Heart left ventricle (tissue), 16 donors: ENCODE measurements at regions of chr7 and their contacts with region 1.

Region 1: DNA sequence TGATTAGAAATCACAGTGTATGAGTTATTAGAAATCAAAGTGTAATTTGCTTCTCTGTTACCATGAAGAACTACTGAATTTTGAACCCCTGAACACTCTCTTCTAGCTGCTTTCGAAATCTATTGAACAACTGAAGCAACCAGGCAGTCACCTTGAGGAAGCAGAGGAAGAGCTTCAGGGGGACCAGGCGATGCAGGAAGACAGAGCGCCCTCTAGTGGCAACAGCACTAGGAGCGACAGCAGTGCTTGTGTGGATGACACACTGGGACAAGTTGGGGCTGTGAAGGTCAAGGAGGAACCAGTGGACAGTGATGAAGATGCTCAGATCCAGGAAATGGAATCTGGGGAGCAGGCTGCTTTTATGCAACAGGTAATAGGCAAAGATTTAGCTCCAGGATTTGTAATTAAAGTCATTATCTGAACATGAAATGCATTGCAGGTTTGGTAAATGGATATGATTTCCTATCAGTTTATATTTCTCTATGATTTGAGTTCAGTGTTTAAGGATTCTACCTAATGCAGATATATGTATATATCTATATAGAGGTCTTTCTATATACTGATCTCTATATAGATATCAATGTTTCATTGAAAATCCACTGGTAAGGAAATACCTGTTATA is 170.7 kb downstream of the HDAC9 start:
- DNase-seq: peak; percentile 79 to 83 (median 79)
- ATAC-seq: peak; percentile 77 to 94 (median 90)
- H3K4me3 ChIP-seq: no peak overlapping the region
- H3K27ac ChIP-seq: no peak overlapping the region
- H3K4me1 ChIP-seq: peaks cover 0 to 23% (median 9%) of the 10 kb centered on the region in 12 donors
- H3K27me3 ChIP-seq: no peaks in the 10 kb centered on the region
- CTCF ChIP-seq: peak; percentile 79 to 98 (median 92)
- POLR2A ChIP-seq: no peak

Region 2: DNA sequence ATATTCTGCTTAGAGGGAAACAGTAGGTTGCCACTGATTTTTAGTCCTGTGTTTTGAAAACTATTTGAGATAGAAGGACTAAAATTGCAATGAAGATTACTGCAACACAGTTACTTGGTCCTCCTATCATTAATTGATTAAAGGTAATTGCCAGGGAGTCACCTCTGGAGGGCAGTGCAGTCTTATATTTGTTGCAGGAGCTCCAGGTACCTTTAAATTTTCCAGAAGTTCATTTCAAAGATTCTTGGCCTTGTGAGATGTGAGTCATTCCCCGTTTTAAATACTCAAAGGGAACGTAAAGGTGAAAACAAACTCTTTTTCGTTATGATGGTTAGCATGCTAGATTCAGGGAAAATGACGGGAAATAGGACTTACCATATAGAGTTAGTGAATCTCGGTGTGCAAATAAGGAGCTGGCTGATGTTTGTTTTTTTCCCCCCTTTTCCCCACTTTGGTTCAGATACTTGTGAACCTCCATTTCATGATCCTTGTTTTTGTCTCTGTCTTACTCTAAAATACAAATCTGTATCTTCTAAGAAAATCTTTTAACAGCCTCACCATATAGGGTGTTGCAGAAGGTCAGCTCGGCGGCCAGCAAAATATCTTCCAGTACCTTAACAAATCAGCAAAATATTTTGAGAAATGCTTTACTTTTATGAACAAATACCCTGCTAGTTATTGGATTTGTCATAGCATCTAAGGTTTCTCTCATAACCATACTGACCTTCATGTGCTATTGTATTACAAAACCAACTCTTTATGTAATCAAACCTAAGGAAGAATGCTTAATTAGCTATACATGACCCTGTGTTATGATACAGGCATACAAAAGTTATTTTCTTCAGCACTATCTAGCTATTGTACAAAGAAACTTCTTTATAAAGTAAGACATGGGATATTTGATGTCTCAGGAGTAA is 313.6 kb before region 1 on chr7:
- intact Hi-C with region 1: loop called (anchors 2 to 10 kb)
- DNase-seq: peak in 4 of 5 donors; percentile 26 to 30 (median 29)
- ATAC-seq: peak in 3 of 4 donors; percentile 63 to 77 (median 71)
- H3K4me3 ChIP-seq: no peak overlapping the region
- H3K27ac ChIP-seq: no peak overlapping the region
- H3K4me1 ChIP-seq: peaks cover 0 to 12% (median 5%) of the 10 kb centered on the region in 12 donors
- H3K27me3 ChIP-seq: no peaks in the 10 kb centered on the region
- CTCF ChIP-seq: peak; percentile 33 to 77 (median 62)
- POLR2A ChIP-seq: no peak

Region 3: DNA sequence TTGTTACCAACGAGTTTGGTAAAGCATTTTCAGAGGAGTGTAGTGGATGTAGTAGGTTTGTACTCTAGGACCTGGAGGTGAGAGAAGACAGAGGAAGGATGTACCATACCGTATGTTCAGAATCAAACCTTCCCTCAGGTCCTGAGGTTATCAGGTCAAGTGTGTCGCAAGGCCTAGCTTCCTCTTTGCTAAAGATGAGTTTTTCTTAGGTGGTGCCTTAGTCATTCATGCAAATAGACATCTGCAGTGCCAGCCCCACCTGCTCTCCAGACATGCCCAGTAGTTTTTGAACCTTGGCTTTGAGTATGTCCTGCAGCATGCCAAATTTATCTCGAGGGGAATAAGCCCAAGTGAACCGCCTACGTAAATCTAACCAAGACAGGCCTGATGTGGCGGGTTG is 99.4 kb before region 1 on chr7:
- intact Hi-C with region 1: no loop called
- DNase-seq: no peak
- ATAC-seq: no peak
- H3K4me3 ChIP-seq: no peak overlapping the region
- H3K27ac ChIP-seq: no peak overlapping the region
- H3K4me1 ChIP-seq: peaks cover 0 to 26% (median 6%) of the 10 kb centered on the region in 12 donors
- H3K27me3 ChIP-seq: no peaks in the 10 kb centered on the region
- CTCF ChIP-seq: no peak
- POLR2A ChIP-seq: no peak

Region 4: DNA sequence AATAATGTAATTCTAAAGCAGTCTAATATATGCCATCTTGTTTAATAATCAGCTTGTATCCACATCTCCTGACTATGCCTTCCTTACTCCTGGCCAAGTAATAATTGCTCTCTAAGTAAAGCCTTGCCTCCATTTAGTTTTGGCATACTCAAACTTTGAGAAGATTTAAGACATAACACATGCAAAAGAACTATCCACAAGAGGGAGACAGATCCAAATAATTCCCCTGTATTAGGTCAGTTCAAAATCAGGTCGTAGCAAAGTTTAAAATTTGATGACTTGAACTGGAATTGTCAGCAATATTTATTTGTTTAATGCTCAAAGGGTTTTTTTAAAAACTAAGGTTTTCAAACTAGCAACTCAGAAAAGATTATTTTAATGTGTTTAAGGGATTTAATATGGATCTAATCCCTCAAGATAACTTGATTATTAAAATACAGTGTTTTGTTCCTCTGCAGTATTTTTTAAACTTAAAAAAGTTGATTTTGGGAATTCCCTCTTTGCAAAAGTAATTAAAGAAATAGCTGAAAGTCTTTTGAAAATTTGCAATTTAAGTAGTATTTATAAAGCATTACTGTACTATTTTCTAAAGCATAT is 75.4 kb before region 1 on chr7:
- intact Hi-C with region 1: loop called in 8 of 10 experiments (anchors 2 to 10 kb)
- DNase-seq: no peak
- ATAC-seq: peak in 2 of 4 donors; percentile 48 to 50
- H3K4me3 ChIP-seq: no peak overlapping the region
- H3K27ac ChIP-seq: no peak overlapping the region
- H3K4me1 ChIP-seq: peaks cover 0 to 6% (median 0%) of the 10 kb centered on the region in 12 donors
- H3K27me3 ChIP-seq: no peaks in the 10 kb centered on the region
- CTCF ChIP-seq: peak; percentile 33 to 69 (median 54)
- POLR2A ChIP-seq: no peak

Region 5: GRCh38 chr7:18597754-18598153 is 68.5 kb before region 1 on chr7:
- intact Hi-C with region 1: loop called in 7 of 10 experiments (anchors 5 to 10 kb)
- DNase-seq: no peak
- ATAC-seq: peak; percentile 49 to 73 (median 68)
- H3K4me3 ChIP-seq: no peak overlapping the region
- H3K27ac ChIP-seq: peak overlapping the region in 5 of 12 donors; percentile 13 to 62 (median 43)
- H3K4me1 ChIP-seq: peaks cover 0 to 14% (median 0%) of the 10 kb centered on the region in 12 donors
- H3K27me3 ChIP-seq: no peaks in the 10 kb centered on the region
- CTCF ChIP-seq: no peak
- POLR2A ChIP-seq: no peak

Region 6: GRCh38 chr7:18610331-18610948 is 55.8 kb before region 1 on chr7:
- intact Hi-C with region 1: loop called in 1 of 10 experiments (anchors 10 kb)
- DNase-seq: no peak
- ATAC-seq: no peak
- H3K4me3 ChIP-seq: no peak overlapping the region
- H3K27ac ChIP-seq: no peak overlapping the region
- H3K4me1 ChIP-seq: peaks cover 0 to 2% (median 0%) of the 10 kb centered on the region in 12 donors
- H3K27me3 ChIP-seq: no peaks in the 10 kb centered on the region
- CTCF ChIP-seq: peak; percentile 16 to 58 (median 36)
- POLR2A ChIP-seq: no peak

Region 7: DNA sequence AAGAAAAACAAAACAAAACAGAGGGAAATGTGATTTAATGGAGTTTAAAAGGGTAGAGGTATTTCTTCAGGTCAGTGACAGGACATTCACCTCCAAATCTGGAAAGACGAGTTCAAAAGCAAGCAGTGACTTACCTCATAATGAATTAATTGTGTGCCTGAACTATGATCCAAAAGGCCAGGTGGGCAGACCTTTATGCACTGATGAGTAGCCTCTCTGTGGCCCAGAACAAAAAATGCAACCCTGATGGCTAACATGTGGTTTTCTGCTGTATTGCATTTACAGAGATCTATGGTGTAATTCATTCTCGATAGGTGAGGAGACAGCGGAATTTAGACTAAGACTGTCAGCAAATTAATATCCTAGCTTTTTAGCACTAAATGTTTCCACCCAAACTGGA is 28.7 kb before region 1 on chr7:
- intact Hi-C with region 1: no loop called
- DNase-seq: no peak
- ATAC-seq: no peak
- H3K4me3 ChIP-seq: no peak overlapping the region
- H3K27ac ChIP-seq: no peak overlapping the region
- H3K4me1 ChIP-seq: peaks cover 0 to 24% (median 5%) of the 10 kb centered on the region in 12 donors
- H3K27me3 ChIP-seq: no peaks in the 10 kb centered on the region
- CTCF ChIP-seq: no peak
- POLR2A ChIP-seq: no peak

Region 8: DNA sequence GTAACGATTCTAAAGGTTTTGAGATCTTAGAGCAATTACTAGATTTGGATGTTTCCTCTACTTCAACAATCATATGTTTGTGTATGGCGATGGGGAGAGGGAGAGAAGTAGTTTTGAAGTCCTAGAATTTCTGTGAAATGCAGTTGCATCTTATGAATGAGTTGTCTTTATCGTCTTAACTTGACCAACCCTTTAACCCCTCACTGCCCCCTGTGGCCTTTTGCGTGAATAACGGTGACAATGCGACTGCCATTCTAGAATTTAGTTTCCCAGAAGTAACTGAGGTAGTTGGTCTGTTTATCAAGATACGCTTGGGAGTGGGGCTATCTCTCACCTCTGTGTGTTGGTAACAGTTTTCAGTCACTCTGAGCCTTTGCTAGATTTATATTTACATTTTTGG is 33.9 kb after region 1 on chr7:
- intact Hi-C with region 1: no loop called
- DNase-seq: no peak
- ATAC-seq: no peak
- H3K4me3 ChIP-seq: no peak overlapping the region
- H3K27ac ChIP-seq: no peak overlapping the region
- H3K4me1 ChIP-seq: peaks cover 0 to 8% (median 0%) of the 10 kb centered on the region in 12 donors
- H3K27me3 ChIP-seq: no peaks in the 10 kb centered on the region
- CTCF ChIP-seq: no peak
- POLR2A ChIP-seq: no peak